ENCODE measurements at regions of chr18 and their contacts with region 1.

Region 1: DNA sequence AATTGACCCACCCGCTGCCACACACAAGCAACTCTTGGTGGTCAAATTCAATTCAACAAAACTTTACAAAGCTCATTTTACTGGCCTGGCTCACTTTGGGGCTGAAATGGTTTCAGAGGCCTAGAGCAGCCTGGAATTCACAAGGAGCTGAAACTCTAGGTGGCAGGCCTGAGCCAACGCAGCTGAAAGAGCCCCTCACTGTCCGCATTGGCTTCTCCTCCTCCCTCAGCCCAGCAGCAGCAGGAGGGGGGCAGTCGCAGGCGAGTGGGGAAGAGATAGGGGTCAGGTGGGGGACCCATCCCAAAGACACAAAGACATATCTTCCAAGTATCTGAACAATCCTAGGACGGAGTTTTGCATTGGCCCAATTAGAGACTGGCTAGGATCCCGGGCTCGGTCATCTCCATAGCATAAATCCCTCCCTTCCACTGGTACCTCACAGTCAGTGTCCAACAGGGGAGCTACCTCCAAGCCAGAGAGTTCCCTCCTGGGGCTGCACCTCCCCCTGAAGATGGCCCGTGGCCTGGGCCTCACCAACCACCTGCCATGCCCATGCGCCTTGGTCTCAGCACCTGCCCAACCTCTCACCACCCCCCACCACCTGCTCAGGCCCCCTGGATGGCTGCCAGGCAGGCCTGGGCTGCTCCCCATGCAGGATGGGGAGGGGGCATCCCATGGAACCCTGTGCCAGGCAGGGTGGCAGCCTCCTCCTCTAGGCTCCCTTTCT is 113.4 kb downstream of the ZBTB7C start:
- DNase-seq: peak; percentile 66
- ATAC-seq: peak; percentile 90
- H3K4me3 Mint-ChIP-seq: no peak overlapping the region
- H3K27ac Mint-ChIP-seq: no peak overlapping the region
- H3K4me1 Mint-ChIP-seq: peaks cover 27% of the 10 kb centered on the region
- H3K27me3 Mint-ChIP-seq: no peaks in the 10 kb centered on the region
- CTCF ChIP-seq: no peak

Region 2: DNA sequence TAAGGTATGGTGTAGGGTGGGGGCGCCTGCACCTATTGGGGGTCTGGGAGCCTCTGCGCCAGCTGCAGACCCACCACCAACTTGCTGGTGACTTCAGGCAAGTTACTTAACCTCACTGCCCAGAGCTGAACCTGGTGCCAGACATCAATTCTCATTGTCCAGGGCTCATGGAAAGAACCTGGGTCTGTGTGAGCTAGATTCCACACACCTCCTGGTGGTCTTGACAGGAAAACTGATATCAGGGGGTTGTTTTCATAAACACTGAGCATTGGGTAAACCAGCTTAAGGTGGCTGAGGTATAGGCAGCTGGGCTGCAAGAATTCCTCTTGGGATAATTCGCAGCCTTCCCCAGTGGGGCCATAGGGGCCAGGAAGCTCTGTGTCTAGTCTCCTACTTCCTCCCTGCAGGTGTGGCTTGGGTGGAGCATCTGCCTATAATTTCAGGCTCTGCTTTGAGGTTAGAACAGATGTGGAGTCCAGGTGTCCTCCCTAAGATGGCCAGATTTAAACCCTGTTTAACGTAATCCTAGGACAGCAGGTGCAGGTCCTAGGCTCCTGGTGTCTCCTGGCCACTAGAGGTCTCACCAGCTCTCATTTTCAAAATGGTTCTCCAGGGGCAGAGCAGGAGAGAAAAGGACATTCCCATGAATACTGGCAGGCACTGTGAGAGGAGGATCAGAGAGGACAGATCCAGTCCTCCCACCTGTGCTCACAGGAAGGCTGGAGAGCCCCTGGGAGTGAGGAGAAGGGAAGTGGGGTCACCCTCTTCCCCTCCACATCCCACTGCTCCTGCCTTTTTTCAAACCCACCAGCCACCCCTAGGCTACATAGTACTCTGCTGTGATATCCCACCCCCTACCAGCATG is 264.9 kb before region 1 on chr18:
- CTCF ChIA-PET with region 1: interaction called, 15 read pairs
- POLR2A ChIA-PET with region 1: no interaction called
- DNase-seq: peak; percentile 59
- ATAC-seq: peak; percentile 91
- H3K4me3 Mint-ChIP-seq: no peak overlapping the region
- H3K27ac Mint-ChIP-seq: no peak overlapping the region
- H3K4me1 Mint-ChIP-seq: peaks cover 19% of the 10 kb centered on the region
- H3K27me3 Mint-ChIP-seq: no peaks in the 10 kb centered on the region
- CTCF ChIP-seq: peak; percentile 42; the same call in 1 of the 2 replicates

Region 3: GRCh38 chr18:48230467-48231113 is 65.2 kb before region 1 on chr18:
- CTCF ChIA-PET with region 1: interaction called, 30 read pairs
- POLR2A ChIA-PET with region 1: no interaction called
- DNase-seq: peak; percentile 84
- ATAC-seq: peak; percentile 96
- H3K4me3 Mint-ChIP-seq: no peak overlapping the region
- H3K27ac Mint-ChIP-seq: no peak overlapping the region
- H3K4me1 Mint-ChIP-seq: peaks cover 6% of the 10 kb centered on the region
- H3K27me3 Mint-ChIP-seq: no peaks in the 10 kb centered on the region
- CTCF ChIP-seq: peak; percentile 65

Region 4: GRCh38 chr18:48274301-48274700 is 21.4 kb before region 1 on chr18:
- CTCF ChIA-PET with region 1: interaction called, 12 read pairs
- POLR2A ChIA-PET with region 1: interaction called, 3 read pairs
- DNase-seq: no peak
- ATAC-seq: no peak
- H3K4me3 Mint-ChIP-seq: no peak overlapping the region
- H3K27ac Mint-ChIP-seq: no peak overlapping the region
- H3K4me1 Mint-ChIP-seq: peaks cover 9% of the 10 kb centered on the region
- H3K27me3 Mint-ChIP-seq: no peaks in the 10 kb centered on the region; the same call in none of the 2 replicates
- CTCF ChIP-seq: no peak

Region 5: DNA sequence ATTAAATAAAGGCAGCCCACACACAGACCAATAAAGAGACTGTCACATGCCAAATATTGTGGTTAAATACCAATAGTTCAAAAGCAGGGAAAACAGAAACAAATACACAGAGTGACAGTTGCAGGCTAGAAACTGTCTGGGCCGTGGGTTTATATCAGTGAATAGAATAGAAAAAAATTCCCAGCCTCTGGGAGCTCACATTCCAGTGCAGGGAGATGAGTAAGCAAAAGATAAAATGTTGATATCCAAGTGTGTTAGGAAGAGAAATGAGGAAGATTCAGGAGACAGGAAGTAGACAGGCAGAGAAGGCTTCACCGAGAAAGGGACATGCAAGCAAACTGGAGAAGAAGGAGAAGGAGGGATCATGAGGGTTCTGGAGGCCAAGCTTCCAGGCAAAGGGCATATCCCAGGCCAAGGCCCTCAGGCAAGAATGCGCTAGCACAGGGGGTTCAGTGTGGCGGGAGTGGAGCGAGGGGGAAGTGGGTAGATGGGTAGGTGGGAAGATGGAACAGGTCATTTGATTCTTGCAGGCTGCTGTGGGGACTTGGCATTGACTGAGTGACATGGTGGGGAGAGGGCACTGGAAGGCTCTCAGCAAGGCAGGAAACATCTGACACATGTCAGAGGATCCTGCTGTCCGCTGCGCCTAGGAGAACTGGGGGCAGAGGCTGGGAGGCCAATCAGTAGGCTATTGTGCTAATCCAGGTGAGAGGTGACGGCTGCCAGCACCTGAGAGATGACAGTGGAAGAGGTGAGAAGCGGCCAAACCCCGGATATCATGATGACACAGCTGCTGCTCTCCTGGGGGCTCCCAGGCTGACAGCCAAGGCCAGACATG is 24.3 kb after region 1 on chr18:
- CTCF ChIA-PET with region 1: interaction called, 20 read pairs
- POLR2A ChIA-PET with region 1: no interaction called
- DNase-seq: no peak
- ATAC-seq: no peak
- H3K4me3 Mint-ChIP-seq: no peak overlapping the region
- H3K27ac Mint-ChIP-seq: no peak overlapping the region
- H3K4me1 Mint-ChIP-seq: peaks cover 13% of the 10 kb centered on the region
- H3K27me3 Mint-ChIP-seq: peaks cover 2% of the 10 kb centered on the region
- CTCF ChIP-seq: no peak

Region 6: DNA sequence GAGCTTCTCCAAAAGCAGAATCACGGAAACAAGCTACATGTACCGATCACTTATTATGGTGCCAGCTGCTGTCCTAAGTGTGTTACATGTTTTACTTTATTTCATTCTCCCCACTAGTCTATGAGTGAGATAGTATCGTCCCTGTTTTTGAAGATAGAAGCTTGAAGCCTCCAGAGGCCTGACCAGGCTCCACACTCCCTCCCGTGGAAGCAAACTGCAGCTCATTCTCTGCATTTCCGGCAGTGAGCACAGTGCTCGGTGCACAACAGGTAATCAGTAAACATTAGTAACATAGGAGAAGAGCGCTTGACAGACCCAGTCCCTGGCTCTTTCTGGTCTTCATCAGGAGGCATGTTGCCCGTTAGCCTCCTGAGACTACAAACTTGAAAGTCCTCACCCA is 40.6 kb after region 1 on chr18:
- CTCF ChIA-PET with region 1: interaction called, 10 read pairs
- POLR2A ChIA-PET with region 1: no interaction called
- DNase-seq: no peak
- ATAC-seq: peak; percentile 14; the same call in 1 of the 2 replicates
- H3K4me3 Mint-ChIP-seq: no peak overlapping the region
- H3K27ac Mint-ChIP-seq: no peak overlapping the region
- H3K4me1 Mint-ChIP-seq: peaks cover 23% of the 10 kb centered on the region
- H3K27me3 Mint-ChIP-seq: no peaks in the 10 kb centered on the region
- CTCF ChIP-seq: no peak